ENCODE measurements at regions of chr10 and their contacts with region 1.

Region 1: GRCh38 chr10:70815504-70816219 is at the start of gene SGPL1:
- DNase-seq: peak; percentile 68 to 91
- H3K4me3 ChIP-seq: peak within 1 kb of the TSS; percentile 68
- H3K27ac ChIP-seq: peak within 1 kb of the TSS; percentile 89
- H3K4me1 ChIP-seq: peaks cover 45% of the 10 kb centered on the region
- H3K27me3 ChIP-seq: no peaks in the 10 kb centered on the region
- CTCF ChIP-seq: peak; percentile 84
- total RNA-seq, gene SGPL1: 96.9 and 141 TPM in 2 replicates

Region 2: DNA sequence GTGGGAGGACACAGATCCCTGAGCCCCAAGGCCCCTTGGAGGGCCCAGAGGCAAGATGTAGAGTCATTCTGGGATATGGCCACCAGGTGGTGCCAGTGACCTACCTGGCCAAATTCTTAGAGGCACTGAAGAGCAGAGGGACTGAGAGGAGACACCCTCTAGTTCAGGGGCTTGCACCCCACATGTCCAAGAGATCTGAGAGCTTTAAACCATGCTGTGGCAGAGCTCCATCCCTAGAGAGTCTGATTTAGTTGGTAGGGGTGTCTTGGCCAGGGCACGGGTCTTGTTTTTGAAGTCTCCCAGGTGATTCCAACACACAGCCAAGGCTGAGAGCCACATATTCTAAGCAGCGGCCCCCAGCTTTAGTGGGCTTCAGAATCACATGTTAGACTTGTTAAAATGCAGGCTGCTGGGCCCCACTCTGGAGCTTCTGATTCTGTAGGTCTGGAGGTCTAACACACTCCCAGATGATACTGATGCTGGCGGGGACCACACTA is 265.7 kb before region 1 on chr10:
- CTCF ChIA-PET with region 1: interaction called, 11 read pairs
- POLR2A ChIA-PET with region 1: interaction called, 3 read pairs
- intact Hi-C with region 1: loop called (anchors 2 kb)
- DNase-seq: peak; percentile 47 to 76
- H3K4me3 ChIP-seq: no peak overlapping the region
- H3K27ac ChIP-seq: no peak overlapping the region
- H3K4me1 ChIP-seq: no peaks in the 10 kb centered on the region
- H3K27me3 ChIP-seq: no peaks in the 10 kb centered on the region
- CTCF ChIP-seq: peak; percentile 98

Region 3: DNA sequence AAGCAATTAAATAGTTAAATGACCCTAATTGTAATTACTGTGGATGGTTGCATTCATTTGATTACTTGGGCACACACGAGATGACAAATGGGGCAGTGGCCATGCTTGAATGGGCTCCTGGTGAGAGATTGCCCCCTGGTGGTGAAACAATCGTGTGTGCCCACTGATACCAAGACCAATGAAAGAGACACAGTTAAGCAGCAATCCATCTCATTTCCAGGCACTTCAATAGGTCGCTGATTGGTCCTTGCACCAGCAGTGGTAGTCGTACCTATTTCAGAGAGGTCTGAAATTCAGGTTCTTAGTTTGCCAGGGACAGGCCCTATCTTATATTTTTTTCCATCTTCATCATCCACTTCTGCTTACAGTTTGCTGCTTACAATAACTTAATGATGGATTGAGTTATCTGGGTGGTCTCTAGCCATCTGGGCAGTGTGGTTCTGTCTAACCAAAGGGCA is 64.4 kb after region 1 on chr10:
- CTCF ChIA-PET with region 1: interaction called, 12 read pairs
- POLR2A ChIA-PET with region 1: no interaction called
- intact Hi-C with region 1: loop called (anchors 1 kb)
- DNase-seq: peak; percentile 59 to 76
- H3K4me3 ChIP-seq: no peak overlapping the region
- H3K27ac ChIP-seq: no peak overlapping the region
- H3K4me1 ChIP-seq: 0 out of 2 replicates have a peak, but pooled peaks cover 8% of the 10 kb centered on the region
- H3K27me3 ChIP-seq: no peaks in the 10 kb centered on the region
- CTCF ChIP-seq: peak; percentile 97

Region 4: DNA sequence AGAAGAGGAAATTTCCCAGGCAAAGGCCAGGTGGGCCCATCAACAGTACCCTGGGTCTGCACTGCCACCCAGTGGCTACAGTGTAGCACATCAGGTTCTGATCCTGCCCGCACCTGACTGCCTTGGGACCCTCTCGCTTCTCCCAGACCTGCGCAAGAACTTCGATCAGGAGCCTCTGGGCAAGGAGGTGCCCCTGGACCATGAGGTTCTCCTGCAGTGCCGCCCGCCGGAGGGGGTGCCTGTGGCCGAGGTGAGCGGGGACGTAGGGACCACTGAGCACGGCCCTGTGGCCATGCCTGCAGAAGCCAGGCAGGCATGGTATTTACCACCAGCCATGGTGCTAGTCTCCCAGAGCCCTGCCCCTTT is 469.5 kb after region 1 on chr10:
- CTCF ChIA-PET with region 1: no interaction called
- POLR2A ChIA-PET with region 1: no interaction called
- intact Hi-C with region 1: loop called (anchors 2 kb)
- DNase-seq: peak; percentile 41 to 55
- H3K4me3 ChIP-seq: no peak overlapping the region
- H3K27ac ChIP-seq: no peak overlapping the region
- H3K4me1 ChIP-seq: no peaks in the 10 kb centered on the region
- H3K27me3 ChIP-seq: no peaks in the 10 kb centered on the region
- CTCF ChIP-seq: peak; percentile 91